HepG2 (cell line): ENCODE measurements at regions of chr4 and their contacts with region 1.

Region 1: GRCh38 chr4:147590249-147590920 is 26.8 kb upstream of the TMEM184C start:
- DNase-seq: peak; percentile 31
- ATAC-seq: peak; percentile 70
- H3K4me3 ChIP-seq: no peak overlapping the region
- H3K27ac ChIP-seq: no peak overlapping the region
- H3K4me1 ChIP-seq: no peaks in the 10 kb centered on the region
- H3K27me3 ChIP-seq: no peaks in the 10 kb centered on the region
- CTCF ChIP-seq: peak; percentile 76
- EP300 ChIP-seq: no peak
- POLR2A ChIP-seq: no peak
- RAD21 ChIP-seq: peak; percentile 51; the same call in 1 of the 2 replicates

Region 2: DNA sequence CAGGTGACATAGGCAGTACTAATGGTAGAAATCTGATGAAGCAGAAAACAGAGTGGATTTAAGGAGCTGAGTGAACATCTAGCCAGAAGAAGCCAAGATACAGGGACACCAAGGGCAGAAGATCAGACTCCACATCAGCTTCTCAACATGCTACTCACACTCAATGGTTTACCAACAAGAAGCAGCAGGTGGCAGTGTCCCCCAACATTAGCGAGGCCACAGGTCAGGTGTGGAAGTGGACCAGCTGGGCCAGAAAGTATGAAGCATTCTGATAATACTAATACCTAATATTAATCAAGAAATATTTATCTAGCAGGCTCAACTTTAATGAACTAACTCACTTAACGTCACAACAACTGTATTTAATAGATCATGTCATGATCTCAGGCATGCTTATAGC is 571.3 kb before region 1 on chr4:
- CTCF ChIA-PET with region 1: no interaction called
- POLR2A ChIA-PET with region 1: no interaction called
- in situ Hi-C with region 1: loop called (anchors 25 kb)
- intact Hi-C with region 1: loop called (anchors 1 kb)
- DNase-seq: peak; percentile 47
- ATAC-seq: peak; percentile 94
- H3K4me3 ChIP-seq: no peak overlapping the region
- H3K27ac ChIP-seq: no peak overlapping the region
- H3K4me1 ChIP-seq: no peaks in the 10 kb centered on the region
- H3K27me3 ChIP-seq: no peaks in the 10 kb centered on the region
- CTCF ChIP-seq: peak; percentile 80
- EP300 ChIP-seq: no peak
- POLR2A ChIP-seq: no peak
- RAD21 ChIP-seq: peak; percentile 69; the same call in 1 of the 2 replicates

Region 3: DNA sequence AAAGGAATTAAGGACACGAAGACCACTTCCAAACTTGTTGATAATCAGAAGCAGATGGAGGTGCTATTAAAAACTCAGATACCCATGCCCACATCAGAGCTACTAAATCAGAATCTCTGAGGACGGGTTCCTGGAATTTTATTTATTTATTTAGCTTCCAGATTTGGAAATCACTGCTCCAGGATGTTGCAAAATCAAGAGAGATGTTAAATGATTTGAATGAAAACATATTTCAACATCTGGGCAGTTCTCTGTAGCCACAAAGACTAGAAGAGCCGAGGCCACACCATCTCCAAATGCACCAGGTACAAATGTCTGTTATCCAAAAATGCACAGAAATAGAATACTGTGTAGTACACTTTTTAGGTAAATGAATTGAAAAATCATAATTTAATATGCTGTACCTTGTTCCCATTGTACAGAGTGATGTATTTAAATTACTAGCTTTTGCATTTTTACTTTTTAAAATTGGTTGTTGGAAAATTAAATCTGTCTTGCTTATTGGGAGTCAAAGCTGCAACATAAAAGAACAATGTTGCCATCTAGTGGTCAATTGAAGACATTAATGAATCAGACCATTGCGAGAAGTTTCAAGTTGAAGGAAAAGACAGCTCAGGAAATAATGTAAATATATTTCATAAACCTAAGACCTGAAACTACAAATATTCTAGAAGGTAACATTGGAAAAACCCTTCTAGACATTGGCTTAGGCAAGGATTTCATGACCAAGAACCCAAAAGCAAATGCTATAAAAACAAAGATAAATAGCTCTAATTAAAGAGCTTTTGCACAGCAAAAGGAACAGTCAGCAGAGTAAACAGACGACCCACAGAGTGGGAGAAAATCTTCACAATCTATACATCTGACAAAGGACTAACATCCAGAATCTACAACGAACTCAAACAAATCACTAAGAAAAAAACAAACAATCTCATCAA is 493.4 kb before region 1 on chr4:
- CTCF ChIA-PET with region 1: no interaction called
- POLR2A ChIA-PET with region 1: no interaction called
- in situ Hi-C with region 1: no loop called
- intact Hi-C with region 1: loop called (anchors 5 kb)
- DNase-seq: peak; percentile 34
- ATAC-seq: peak; percentile 41; the same call in 1 of the 3 replicates
- H3K4me3 ChIP-seq: no peak overlapping the region
- H3K27ac ChIP-seq: no peak overlapping the region
- H3K4me1 ChIP-seq: no peaks in the 10 kb centered on the region
- H3K27me3 ChIP-seq: no peaks in the 10 kb centered on the region
- CTCF ChIP-seq: peak; percentile 66
- EP300 ChIP-seq: no peak
- POLR2A ChIP-seq: no peak
- RAD21 ChIP-seq: no peak

Region 4: DNA sequence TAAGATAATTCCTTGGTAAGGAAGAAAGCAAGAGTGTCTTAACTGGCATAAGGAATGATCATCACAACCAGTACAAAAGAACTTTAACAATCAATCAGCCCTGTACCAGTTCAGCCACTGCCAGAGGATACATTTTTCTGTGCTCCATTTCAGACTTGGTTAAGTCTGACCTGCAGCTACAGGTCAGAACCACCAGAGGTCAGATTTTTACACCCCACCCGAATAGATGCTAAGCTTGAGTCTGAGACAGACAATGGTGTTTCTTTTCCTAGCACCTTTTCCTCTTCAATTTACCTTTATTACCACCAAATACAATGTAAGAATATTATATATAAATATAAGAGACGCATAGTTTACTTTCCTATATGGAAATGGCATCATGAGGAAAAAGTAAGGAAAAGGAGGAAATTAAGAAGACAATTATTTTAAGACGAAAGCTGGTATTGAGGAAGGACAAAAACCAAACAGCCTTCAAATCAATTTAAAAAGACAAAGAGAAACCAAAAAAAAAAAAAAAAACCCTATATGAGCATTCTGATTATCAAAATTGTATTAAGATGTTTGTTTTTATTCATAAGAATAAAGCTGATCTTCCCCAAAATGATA is 429.4 kb before region 1 on chr4:
- CTCF ChIA-PET with region 1: interaction called, 21 read pairs
- POLR2A ChIA-PET with region 1: no interaction called
- in situ Hi-C with region 1: loop called (anchors 10 kb)
- intact Hi-C with region 1: loop called (anchors 1 kb)
- DNase-seq: peak; percentile 24
- ATAC-seq: peak; percentile 79
- H3K4me3 ChIP-seq: no peak overlapping the region
- H3K27ac ChIP-seq: no peak overlapping the region
- H3K4me1 ChIP-seq: peaks cover 7% of the 10 kb centered on the region
- H3K27me3 ChIP-seq: peaks cover 0 to 3% of the 10 kb centered on the region in 2 experiments; a peak in 2 of 5 replicates
- CTCF ChIP-seq: peak; percentile 69
- EP300 ChIP-seq: no peak
- POLR2A ChIP-seq: no peak
- RAD21 ChIP-seq: peak; percentile 29; the same call in 1 of the 2 replicates

Region 5: GRCh38 chr4:147518846-147519767 is 71.3 kb before region 1 on chr4:
- CTCF ChIA-PET with region 1: interaction called, 30 read pairs
- POLR2A ChIA-PET with region 1: no interaction called
- in situ Hi-C with region 1: loop called (anchors 5 kb)
- intact Hi-C with region 1: loop called (anchors 1 kb)
- DNase-seq: peak; percentile 39
- ATAC-seq: peak; percentile 94
- H3K4me3 ChIP-seq: no peak overlapping the region
- H3K27ac ChIP-seq: no peak overlapping the region
- H3K4me1 ChIP-seq: no peaks in the 10 kb centered on the region
- H3K27me3 ChIP-seq: no peaks in the 10 kb centered on the region
- CTCF ChIP-seq: peak; percentile 78
- EP300 ChIP-seq: no peak
- POLR2A ChIP-seq: no peak
- RAD21 ChIP-seq: peak; percentile 39; the same call in 1 of the 2 replicates